Mammary epithelial cell (primary cell): ENCODE measurements at regions of chrX and their contacts with region 1.

Region 1: GRCh38 chrX:154748712-154749343 is 2.0 kb downstream of the GAB3 start:
- DNase-seq: peak; percentile 45
- H3K4me3 ChIP-seq: no peak overlapping the region
- H3K27ac ChIP-seq: no peak overlapping the region
- H3K4me1 ChIP-seq: peaks cover 2% of the 10 kb centered on the region
- H3K27me3 ChIP-seq: no peaks in the 10 kb centered on the region
- CTCF ChIP-seq: peak; percentile 62 to 71

Region 2: GRCh38 chrX:154298312-154298711 is 450.5 kb before region 1 on chrX:
- CTCF ChIA-PET with region 1: no interaction called
- dilution Hi-C with region 1: no loop called
- in situ Hi-C with region 1: no loop called
- intact Hi-C with region 1: no loop called
- DNase-seq: peak; percentile 6
- H3K4me3 ChIP-seq: no peak overlapping the region
- H3K27ac ChIP-seq: no peak overlapping the region
- H3K4me1 ChIP-seq: no peaks in the 10 kb centered on the region
- H3K27me3 ChIP-seq: no peaks in the 10 kb centered on the region
- CTCF ChIP-seq: no peak

Region 3: DNA sequence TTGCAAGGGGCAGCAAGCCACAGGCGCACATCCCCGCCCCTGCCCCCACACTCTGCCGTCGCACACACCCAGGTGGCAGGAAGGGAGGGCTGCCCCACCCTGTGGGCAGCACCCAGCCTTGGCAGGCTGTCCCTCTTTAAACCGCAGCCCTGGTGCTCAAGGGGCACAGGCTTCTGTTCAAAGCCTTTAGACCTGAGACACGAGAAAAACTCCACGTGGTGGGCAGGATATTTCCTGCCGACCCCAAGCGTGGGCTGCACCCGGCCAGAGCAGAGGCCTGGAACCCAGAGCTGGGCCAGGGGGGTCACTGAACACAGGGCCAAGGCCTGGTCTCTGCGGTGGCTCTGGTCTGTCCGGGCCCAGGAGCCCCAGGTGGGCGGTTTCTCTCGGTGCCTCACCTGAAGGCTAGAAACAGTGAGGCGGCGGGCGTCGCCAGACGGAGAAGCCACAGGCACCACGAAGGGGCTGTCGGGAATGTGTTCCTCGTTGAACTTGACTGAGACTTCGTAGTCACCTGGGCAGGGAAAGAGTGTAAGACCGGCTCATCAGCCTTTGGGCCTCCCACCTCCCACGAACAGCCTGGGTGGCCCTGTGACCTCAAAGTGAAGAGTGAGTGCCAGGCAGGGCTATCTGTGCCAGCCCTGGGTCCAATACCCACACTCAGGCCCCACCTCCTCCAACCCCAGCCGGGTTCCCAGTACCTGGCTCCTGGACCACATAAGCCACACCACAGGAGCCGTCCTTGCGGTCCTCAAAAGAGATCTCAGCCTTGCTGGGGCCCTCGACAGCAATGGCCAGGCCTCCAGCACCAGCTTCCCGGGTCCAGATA is 397.4 kb before region 1 on chrX:
- CTCF ChIA-PET with region 1: no interaction called
- dilution Hi-C with region 1: no loop called
- in situ Hi-C with region 1: no loop called
- intact Hi-C with region 1: no loop called
- DNase-seq: no peak
- H3K4me3 ChIP-seq: no peak overlapping the region
- H3K27ac ChIP-seq: no peak overlapping the region
- H3K4me1 ChIP-seq: no peaks in the 10 kb centered on the region
- H3K27me3 ChIP-seq: no peaks in the 10 kb centered on the region
- CTCF ChIP-seq: no peak

Region 4: GRCh38 chrX:154596290-154596929 is 152.4 kb before region 1 on chrX:
- CTCF ChIA-PET with region 1: interaction called, 6 read pairs
- dilution Hi-C with region 1: no loop called
- in situ Hi-C with region 1: loop called (anchors 25 kb)
- intact Hi-C with region 1: no loop called
- DNase-seq: peak; percentile 90
- H3K4me3 ChIP-seq: no peak overlapping the region
- H3K27ac ChIP-seq: no peak overlapping the region
- H3K4me1 ChIP-seq: peaks cover 25% of the 10 kb centered on the region
- H3K27me3 ChIP-seq: no peaks in the 10 kb centered on the region
- CTCF ChIP-seq: peak; percentile 21 to 36

Region 5: DNA sequence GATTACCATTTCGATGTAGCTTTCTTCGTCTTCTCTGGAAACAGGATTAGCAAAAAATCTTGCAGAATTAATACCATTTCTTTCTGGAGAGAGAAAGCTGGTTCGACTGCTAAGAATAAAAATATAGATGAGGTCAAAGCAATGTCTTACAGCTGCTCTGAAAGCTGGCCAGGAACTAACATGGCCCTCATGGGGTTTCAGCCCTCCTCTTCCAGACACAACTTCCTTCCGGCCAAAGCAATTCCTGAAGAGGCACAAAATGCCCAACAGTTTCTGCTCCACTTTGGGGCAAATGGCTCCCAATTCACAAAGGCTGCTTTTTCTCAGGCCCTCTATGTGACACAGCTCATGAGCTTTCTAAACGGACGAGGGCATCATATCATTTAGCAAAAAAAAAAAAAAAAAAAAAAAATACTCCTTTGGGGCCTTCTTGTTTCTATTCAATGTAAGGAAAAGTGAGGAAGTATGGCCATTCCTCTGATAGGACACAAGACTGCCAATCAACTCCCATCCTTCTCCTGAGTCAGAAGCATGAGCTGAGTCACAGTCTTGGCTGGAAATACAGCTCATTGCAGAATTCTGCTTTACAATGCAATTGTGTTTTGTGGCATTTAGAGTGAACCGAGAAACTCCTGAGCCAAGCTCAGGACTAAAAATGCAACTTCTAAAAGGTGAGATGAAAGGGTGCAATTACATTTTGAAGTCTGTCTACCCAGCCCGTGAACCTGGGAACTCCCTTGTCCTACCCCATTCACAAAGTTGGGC is 52.7 kb before region 1 on chrX:
- CTCF ChIA-PET with region 1: no interaction called
- dilution Hi-C with region 1: no loop called
- in situ Hi-C with region 1: no loop called
- intact Hi-C with region 1: no loop called
- DNase-seq: peak; percentile 70
- H3K4me3 ChIP-seq: no peak overlapping the region
- H3K27ac ChIP-seq: no peak overlapping the region
- H3K4me1 ChIP-seq: no peaks in the 10 kb centered on the region
- H3K27me3 ChIP-seq: no peaks in the 10 kb centered on the region
- CTCF ChIP-seq: no peak

Region 6: GRCh38 chrX:154714925-154715324 is 33.9 kb before region 1 on chrX:
- CTCF ChIA-PET with region 1: interaction called, 3 read pairs
- dilution Hi-C with region 1: no loop called
- in situ Hi-C with region 1: no loop called
- intact Hi-C with region 1: loop called (anchors 1 kb)
- DNase-seq: no peak
- H3K4me3 ChIP-seq: no peak overlapping the region
- H3K27ac ChIP-seq: no peak overlapping the region
- H3K4me1 ChIP-seq: peaks cover 17% of the 10 kb centered on the region
- H3K27me3 ChIP-seq: no peaks in the 10 kb centered on the region
- CTCF ChIP-seq: peak; percentile 80 to 87

Region 7: DNA sequence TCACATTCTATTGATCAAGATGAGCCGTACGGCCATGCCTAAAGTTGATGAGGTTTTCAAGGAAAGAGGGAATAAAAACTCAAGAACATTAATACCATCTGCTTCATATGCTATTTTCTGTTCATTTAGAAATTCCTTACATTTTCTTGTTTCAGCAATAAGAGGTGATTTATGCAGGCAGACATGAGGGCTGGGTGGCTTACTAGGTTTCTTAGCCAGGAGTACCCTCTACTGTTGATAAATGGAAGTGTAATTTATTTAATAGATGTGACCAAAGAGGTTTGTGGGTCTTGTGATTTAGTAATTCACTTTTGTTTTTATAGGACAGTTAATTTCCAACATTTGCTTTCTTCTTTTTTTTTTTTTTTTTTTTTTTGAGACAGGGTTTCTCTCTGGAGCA is 92.0 kb after region 1 on chrX:
- CTCF ChIA-PET with region 1: interaction called, 4 read pairs
- dilution Hi-C with region 1: no loop called
- in situ Hi-C with region 1: no loop called
- intact Hi-C with region 1: loop called (anchors 1 kb)
- DNase-seq: peak; percentile 9
- H3K4me3 ChIP-seq: no peak overlapping the region
- H3K27ac ChIP-seq: no peak overlapping the region
- H3K4me1 ChIP-seq: no peaks in the 10 kb centered on the region
- H3K27me3 ChIP-seq: no peaks in the 10 kb centered on the region
- CTCF ChIP-seq: peak; percentile 37 to 50